Common myeloid progenitor, CD34-positive (primary cell): ENCODE measurements at regions of chr3 and their contacts with region 1.

Region 1: DNA sequence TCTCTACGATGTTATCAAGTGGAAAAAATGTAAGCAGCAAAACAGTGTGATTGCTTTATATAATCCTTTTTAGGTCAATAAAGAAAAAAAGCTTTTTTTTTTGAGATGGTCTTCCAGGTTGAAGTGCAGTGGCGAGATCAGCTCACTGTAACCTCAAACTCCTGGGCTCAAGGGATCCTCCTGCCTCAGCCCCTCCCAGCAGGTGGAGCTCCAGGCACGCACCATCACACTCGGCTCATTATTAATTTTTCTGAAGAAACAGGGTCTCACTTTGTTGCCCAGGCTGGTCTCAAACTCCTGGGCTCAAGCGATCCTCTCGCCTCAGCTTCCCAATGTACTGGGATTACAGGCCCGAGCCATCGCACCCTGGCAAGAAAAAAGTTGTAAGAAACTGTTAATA is 17.3 kb downstream of the RNF168 start:
- DNase-seq: peak; percentile 45 to 68 (median 68)
- H3K4me3 ChIP-seq: no peak overlapping the region
- H3K27ac ChIP-seq: no peak overlapping the region
- H3K4me1 ChIP-seq: no peaks in the 10 kb centered on the region
- H3K27me3 ChIP-seq: no peaks in the 10 kb centered on the region

Region 2: GRCh38 chr3:196471551-196471950 is 14.7 kb before region 1 on chr3:
- CTCF ChIA-PET with region 1: interaction called, 10 read pairs
- POLR2A ChIA-PET with region 1: no interaction called
- DNase-seq: no peak
- H3K4me3 ChIP-seq: no peak overlapping the region
- H3K27ac ChIP-seq: no peak overlapping the region
- H3K4me1 ChIP-seq: no peaks in the 10 kb centered on the region
- H3K27me3 ChIP-seq: no peaks in the 10 kb centered on the region

Region 3: GRCh38 chr3:196501316-196502044 is 15.2 kb after region 1 on chr3:
- CTCF ChIA-PET with region 1: interaction called, 14 read pairs
- POLR2A ChIA-PET with region 1: interaction called, 5 read pairs
- DNase-seq: peak in 2 of 3 donors; percentile 34 to 38
- H3K4me3 ChIP-seq: peak overlapping the region; percentile 31 to 100 (median 97)
- H3K27ac ChIP-seq: peak overlapping the region; percentile 84 to 93
- H3K4me1 ChIP-seq: peaks cover 4 to 27% (median 18%) of the 10 kb centered on the region in 4 experiments
- H3K27me3 ChIP-seq: no peaks in the 10 kb centered on the region